Activated CD8-positive, alpha-beta T cell treated with anti-CD3 and anti-CD28 coated beads for 36 hours (primary cell): ENCODE measurements at regions of chr3 and their contacts with region 1.

Region 1: GRCh38 chr3:39189959-39190269 is 2.5 kb downstream of the XIRP1 start:
- DNase-seq: peak; percentile 65
- ATAC-seq: peak; percentile 60
- H3K4me3 Mint-ChIP-seq: no peak overlapping the region
- H3K27ac Mint-ChIP-seq: no peak overlapping the region
- H3K4me1 Mint-ChIP-seq: peaks cover 26% of the 10 kb centered on the region
- H3K27me3 Mint-ChIP-seq: no peaks in the 10 kb centered on the region
- CTCF ChIP-seq: peak; percentile 80

Region 2: GRCh38 chr3:39065197-39065596 is 124.7 kb before region 1 on chr3:
- CTCF ChIA-PET with region 1: no interaction called
- POLR2A ChIA-PET with region 1: no interaction called
- intact Hi-C with region 1: no loop called
- DNase-seq: peak; percentile 50
- ATAC-seq: peak; percentile 86
- H3K4me3 Mint-ChIP-seq: no peak overlapping the region
- H3K27ac Mint-ChIP-seq: peak overlapping the region; percentile 30
- H3K4me1 Mint-ChIP-seq: peaks cover 21% of the 10 kb centered on the region
- H3K27me3 Mint-ChIP-seq: no peaks in the 10 kb centered on the region
- CTCF ChIP-seq: peak; percentile 43

Region 3: DNA sequence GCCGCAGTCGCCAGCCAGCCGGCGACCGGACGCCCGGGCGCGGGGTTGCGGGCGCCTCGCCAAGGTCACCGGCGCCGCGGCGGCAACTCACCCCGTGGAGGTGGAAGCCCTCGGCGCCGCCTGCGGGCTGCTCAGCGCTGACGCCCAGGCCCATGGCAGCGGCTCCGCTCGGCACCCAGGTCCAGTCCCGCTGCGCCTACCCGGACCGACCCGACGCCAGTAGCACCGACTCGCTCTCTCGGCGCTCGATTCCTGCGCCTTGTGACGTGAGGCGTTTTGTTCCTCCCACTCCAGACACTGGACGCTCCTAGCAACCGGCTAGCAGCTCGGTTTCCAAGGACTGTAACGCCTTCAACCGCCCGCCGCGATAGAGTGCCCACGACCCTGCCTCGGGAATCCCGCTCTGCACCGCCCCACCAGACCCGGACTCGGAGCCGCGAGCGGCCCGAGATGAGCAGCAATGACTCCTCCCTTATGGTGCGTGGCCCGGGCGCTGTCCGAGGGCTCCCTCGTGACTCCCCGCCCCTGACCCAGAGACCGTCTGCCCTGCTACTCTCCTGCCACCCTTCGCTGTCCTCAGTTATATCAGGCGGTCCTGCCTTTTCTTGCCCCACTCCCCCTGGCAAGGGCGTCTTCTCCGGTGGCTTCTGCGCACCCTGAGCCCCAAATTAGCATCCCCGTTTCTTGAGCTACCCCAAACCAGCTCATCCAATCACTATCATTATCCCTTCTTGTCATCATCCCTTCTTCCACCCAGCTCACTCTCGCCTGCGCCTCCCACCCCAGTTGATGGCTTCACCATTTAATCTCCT is 82.3 kb before region 1 on chr3 and contains the starts of genes GORASP1 and TTC21A:
- CTCF ChIA-PET with region 1: interaction called, 13 read pairs
- POLR2A ChIA-PET with region 1: no interaction called
- intact Hi-C with region 1: no loop called
- DNase-seq: peak; percentile 72
- ATAC-seq: peak; percentile 47
- H3K4me3 Mint-ChIP-seq: peak within 1 kb of the TSS; percentile 87
- H3K27ac Mint-ChIP-seq: peak within 1 kb of the TSS; percentile 68
- H3K4me1 Mint-ChIP-seq: peaks cover 35% of the 10 kb centered on the region
- H3K27me3 Mint-ChIP-seq: no peaks in the 10 kb centered on the region
- CTCF ChIP-seq: no peak
- total RNA-seq, gene GORASP1: 16.2 to 18.3 TPM
- total RNA-seq, gene TTC21A: 0.69 to 0.79 TPM

Region 4: DNA sequence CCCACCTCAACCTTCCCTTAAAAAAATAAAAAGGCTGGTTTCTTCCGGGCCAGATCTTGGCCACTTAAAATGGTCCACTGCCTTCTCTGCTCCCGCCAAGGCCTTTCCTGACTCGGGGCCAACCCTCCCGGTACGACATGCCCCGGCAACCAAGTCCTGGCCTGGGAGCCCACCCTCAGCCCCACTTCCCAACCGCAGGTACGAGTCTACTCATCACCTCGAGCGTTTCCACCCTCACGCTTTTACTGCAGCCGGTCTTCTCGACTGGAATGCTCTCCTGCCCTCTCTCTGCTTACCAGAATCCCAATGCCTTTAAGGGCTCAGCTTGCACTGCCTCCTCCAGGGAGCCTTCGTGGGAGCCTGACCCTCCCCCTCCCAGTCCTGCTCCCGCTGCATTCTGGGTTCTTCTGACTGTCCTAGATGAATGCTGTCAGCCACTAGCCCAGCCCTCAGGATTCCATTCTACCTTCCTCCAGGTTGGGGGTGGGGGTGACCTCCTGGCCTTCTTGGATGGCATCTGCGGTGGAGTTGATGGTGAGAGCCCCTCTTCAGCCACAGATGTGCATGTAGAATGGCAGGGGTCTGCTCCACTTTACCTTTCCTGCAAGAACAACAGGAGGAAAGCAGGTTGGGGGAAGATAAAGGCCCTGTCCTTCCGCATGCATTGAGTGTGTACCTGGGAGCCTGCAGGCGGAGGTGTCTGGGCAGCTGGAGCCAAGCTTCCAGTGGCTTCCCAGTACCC is 35.5 kb before region 1 on chr3:
- CTCF ChIA-PET with region 1: interaction called, 16 read pairs
- POLR2A ChIA-PET with region 1: interaction called, 8 read pairs
- intact Hi-C with region 1: no loop called
- DNase-seq: no peak
- ATAC-seq: no peak
- H3K4me3 Mint-ChIP-seq: peak overlapping the region; percentile 70
- H3K27ac Mint-ChIP-seq: peak overlapping the region; percentile 76
- H3K4me1 Mint-ChIP-seq: peaks cover 43% of the 10 kb centered on the region
- H3K27me3 Mint-ChIP-seq: peaks cover 1% of the 10 kb centered on the region
- CTCF ChIP-seq: no peak

Region 5: DNA sequence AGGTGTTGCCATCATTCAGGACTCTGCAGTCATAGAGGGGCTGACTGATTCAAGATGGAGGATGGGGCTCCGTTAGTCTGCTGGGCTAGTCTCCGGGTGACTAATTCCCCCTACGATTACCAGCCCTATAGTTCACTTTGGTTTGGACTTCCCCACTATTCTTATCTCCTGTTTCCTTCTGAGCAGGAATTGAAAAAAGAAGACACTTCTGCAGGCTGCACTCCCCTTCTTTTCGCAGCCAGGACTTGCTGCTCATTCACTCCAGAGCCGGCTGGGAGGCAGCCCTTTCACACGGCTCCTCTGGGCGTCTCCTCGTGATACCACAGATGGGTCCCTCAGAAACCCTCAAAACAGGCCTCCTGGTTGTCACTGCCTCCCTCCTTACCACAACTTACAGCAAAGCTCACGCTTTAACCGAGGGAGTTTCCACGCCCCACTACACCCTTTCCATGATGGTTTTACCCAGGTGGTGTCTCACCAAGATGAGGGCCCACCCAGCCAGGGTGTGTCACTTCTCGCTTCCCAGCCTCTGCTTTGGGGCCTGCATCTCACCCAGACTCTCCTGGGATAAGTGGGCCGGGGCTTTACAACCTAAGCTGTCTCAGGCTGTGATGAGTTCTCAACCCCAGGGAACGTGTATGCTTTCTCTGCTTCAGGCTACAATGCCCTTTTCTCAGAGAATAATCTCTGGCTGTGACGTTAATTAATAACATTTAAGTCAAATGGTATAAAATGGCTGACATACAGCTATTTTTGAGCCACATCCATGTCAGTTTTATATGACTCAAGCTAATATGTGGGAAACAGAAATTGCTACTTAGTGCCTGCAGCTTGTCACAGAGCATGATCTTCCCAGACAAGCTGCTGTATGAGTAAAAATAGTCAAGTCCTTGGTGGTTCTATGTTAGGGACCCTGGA is 78.0 kb after region 1 on chr3:
- CTCF ChIA-PET with region 1: interaction called, 15 read pairs
- POLR2A ChIA-PET with region 1: interaction called, 3 read pairs
- intact Hi-C with region 1: no loop called
- DNase-seq: peak; percentile 93
- ATAC-seq: peak; percentile 88
- H3K4me3 Mint-ChIP-seq: peak overlapping the region; percentile 51
- H3K27ac Mint-ChIP-seq: peak overlapping the region; percentile 96
- H3K4me1 Mint-ChIP-seq: peaks cover 52% of the 10 kb centered on the region
- H3K27me3 Mint-ChIP-seq: peaks cover 2% of the 10 kb centered on the region
- CTCF ChIP-seq: no peak

Region 6: DNA sequence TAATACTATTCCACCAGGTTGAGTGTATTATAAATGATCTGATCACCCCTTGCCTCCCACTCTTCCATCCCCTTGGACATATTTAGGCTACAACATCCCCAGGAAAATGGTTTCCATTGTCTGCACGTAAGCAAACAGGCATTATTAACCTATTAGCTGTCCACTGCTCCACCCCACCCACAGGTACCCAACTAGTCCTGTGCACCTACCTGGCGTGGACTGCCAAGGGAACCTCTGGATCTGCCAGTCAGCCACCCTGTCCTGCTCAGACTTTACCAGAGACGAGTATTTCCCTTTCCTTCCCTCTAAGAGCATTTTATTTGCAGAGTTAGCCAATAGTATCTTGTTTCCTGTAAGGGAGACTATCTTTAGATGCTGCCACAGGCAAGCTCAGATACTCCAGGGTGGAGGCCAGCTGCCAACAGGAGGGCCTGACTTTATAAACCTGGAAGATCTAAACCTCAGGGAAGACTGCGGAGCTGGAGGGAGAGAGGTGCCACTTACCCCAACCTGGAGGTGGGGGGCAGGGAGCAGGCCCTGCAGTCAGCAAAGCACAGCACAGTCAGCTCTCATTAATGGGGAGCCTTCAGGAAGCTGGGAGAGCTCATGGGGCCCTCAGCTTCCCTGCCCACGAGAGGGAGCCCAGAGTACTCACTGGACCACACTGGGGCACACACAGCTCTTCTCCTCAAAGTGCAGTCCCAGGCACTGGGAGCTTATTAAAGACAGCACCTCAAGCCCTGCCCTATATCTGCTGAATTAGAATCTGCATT is 90.0 kb after region 1 on chr3 and contains the start of gene CX3CR1:
- CTCF ChIA-PET with region 1: interaction called, 754 read pairs
- POLR2A ChIA-PET with region 1: no interaction called
- intact Hi-C with region 1: no loop called
- DNase-seq: no peak
- ATAC-seq: no peak
- H3K4me3 Mint-ChIP-seq: peak within 1 kb of the TSS; percentile 8
- H3K27ac Mint-ChIP-seq: no peak within 1 kb of the TSS
- H3K4me1 Mint-ChIP-seq: peaks cover 12% of the 10 kb centered on the region
- H3K27me3 Mint-ChIP-seq: peaks cover 3% of the 10 kb centered on the region
- CTCF ChIP-seq: no peak
- total RNA-seq, gene CX3CR1: 0.34 to 0.88 TPM

Region 7: DNA sequence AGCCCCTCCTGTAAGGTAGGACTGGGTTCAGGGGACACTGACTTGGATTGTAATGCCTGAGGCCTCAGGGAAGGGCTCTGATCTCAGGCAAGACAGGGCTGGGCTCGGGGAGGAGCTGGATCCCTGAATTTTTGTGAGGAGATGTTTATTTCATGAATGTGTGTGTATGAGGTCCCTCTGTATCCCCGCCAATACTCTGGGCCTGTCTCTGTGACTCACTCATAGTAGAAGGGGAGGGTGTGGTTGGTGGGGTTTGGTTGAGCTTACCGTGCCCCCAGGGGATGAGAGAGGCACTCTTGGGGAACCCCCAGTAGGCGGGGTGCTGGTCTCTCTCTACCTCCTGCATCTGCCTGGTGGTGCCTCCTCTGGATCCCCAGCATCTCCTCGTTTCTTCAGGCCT is 244.7 kb after region 1 on chr3:
- CTCF ChIA-PET with region 1: no interaction called
- POLR2A ChIA-PET with region 1: no interaction called
- intact Hi-C with region 1: no loop called
- DNase-seq: peak; percentile 62
- ATAC-seq: peak; percentile 98
- H3K4me3 Mint-ChIP-seq: no peak overlapping the region
- H3K27ac Mint-ChIP-seq: no peak overlapping the region
- H3K4me1 Mint-ChIP-seq: no peaks in the 10 kb centered on the region
- H3K27me3 Mint-ChIP-seq: peaks cover 1% of the 10 kb centered on the region
- CTCF ChIP-seq: no peak